ENCODE measurements at regions of chr1 and their contacts with region 1.

Region 1: DNA sequence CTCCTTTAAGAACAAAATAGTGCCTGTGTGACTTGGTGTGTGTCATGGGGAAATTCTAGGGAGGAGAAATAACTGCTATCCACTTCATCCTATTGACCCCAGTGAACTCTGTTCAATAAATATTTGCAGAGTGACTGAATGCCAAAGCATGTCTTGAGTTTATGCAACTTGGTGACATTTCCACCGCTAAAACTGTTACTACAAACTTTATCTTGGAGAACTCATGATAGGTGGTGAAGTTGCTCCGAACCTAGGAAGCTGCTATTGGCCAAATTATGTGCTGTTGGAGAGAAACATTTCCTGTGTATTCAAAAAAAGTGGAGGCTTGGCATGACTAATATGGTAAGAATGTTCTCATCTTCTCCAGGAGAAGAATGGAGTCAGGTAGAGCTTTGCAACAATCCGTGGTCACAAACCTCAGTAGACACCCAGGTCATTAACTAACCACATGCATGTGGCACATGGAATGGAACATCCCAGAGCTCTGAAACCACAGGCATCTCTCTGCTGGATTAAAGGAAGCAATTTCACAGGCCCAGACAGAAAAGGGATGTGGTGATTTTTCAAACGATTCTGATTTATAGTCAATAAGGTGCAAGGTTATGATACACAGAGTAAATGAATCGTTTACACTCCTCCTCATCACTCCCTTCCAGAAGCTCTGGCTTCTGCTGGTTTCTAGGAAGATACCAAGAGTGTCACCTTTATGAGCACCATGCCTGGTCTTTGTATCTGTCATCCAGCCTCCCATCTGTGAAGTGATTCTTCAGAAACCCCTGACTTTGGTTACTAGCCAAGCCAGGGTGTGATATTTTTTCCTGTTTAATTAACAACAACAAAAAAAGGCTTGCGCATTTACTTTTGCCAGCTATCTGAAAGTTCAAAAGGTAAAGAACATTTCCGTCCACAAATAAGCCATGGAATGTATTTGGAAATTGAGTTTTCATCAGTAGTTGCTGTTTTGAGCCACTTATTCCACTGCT is 361.1 kb downstream of the TGFB2 start:
- DNase-seq: peak; percentile 82
- H3K4me3 Mint-ChIP-seq: peak overlapping the region; percentile 17
- H3K27ac Mint-ChIP-seq: peak overlapping the region; percentile 96
- H3K4me1 Mint-ChIP-seq: peaks cover 62% of the 10 kb centered on the region
- H3K27me3 Mint-ChIP-seq: no peaks in the 10 kb centered on the region
- CTCF ChIP-seq: no peak

Region 2: GRCh38 chr1:218345673-218346390 is 360.4 kb before region 1 on chr1:
- CTCF ChIA-PET with region 1: interaction called, 3 read pairs
- intact Hi-C with region 1: loop called (anchors 5 kb)
- DNase-seq: peak; percentile 70
- H3K4me3 Mint-ChIP-seq: no peak overlapping the region
- H3K27ac Mint-ChIP-seq: no peak overlapping the region
- H3K4me1 Mint-ChIP-seq: peaks cover 19% of the 10 kb centered on the region
- H3K27me3 Mint-ChIP-seq: no peaks in the 10 kb centered on the region
- CTCF ChIP-seq: no peak

Region 3: DNA sequence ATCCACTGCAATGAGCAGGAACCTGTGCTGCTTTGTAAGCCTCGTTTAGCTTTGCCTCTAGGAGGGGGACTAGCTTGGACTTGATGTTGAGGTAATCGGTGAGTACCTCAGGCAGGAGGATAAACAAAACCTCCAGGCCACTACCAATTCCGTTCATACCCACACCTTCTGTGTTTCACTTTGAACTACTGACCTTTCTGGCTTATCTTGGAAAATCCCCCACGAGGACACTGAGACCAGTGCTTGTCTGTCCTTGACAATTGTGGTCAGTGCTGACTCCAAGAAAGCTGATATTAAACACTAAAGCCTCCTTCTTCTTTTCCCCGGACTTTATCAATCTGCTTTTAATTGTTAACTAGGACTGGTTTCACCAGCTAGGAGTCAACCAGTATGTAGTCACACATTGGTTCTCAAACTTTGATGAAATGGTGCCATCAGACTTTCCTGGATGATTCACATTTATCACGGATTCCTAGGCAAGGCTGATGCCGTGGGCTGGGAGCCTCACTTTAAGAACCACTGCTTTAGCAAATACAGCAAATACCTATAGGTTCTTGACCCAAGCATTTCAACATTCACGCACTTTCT is 308.4 kb before region 1 on chr1:
- CTCF ChIA-PET with region 1: interaction called, 5 read pairs
- intact Hi-C with region 1: loop called (anchors 1 kb)
- DNase-seq: peak; percentile 82
- H3K4me3 Mint-ChIP-seq: peak overlapping the region; percentile 26
- H3K27ac Mint-ChIP-seq: peak overlapping the region; percentile 71
- H3K4me1 Mint-ChIP-seq: peaks cover 40% of the 10 kb centered on the region
- H3K27me3 Mint-ChIP-seq: no peaks in the 10 kb centered on the region
- CTCF ChIP-seq: no peak

Region 4: GRCh38 chr1:218546309-218546708 is 159.9 kb before region 1 on chr1:
- CTCF ChIA-PET with region 1: no interaction called
- intact Hi-C with region 1: loop called (anchors 2 kb)
- DNase-seq: peak; percentile 24
- H3K4me3 Mint-ChIP-seq: no peak overlapping the region
- H3K27ac Mint-ChIP-seq: peak overlapping the region; percentile 0
- H3K4me1 Mint-ChIP-seq: peaks cover 38% of the 10 kb centered on the region
- H3K27me3 Mint-ChIP-seq: no peaks in the 10 kb centered on the region
- CTCF ChIP-seq: no peak

Region 5: GRCh38 chr1:218779341-218780100 is 73.3 kb after region 1 on chr1:
- CTCF ChIA-PET with region 1: no interaction called
- intact Hi-C with region 1: loop called (anchors 2 kb)
- DNase-seq: peak; percentile 31
- H3K4me3 Mint-ChIP-seq: no peak overlapping the region
- H3K27ac Mint-ChIP-seq: no peak overlapping the region
- H3K4me1 Mint-ChIP-seq: peaks cover 26% of the 10 kb centered on the region
- H3K27me3 Mint-ChIP-seq: no peaks in the 10 kb centered on the region
- CTCF ChIP-seq: no peak

Region 6: GRCh38 chr1:218874313-218874712 is 168.1 kb after region 1 on chr1:
- CTCF ChIA-PET with region 1: no interaction called
- intact Hi-C with region 1: loop called (anchors 1 kb)
- DNase-seq: peak; percentile 52
- H3K4me3 Mint-ChIP-seq: peak overlapping the region; percentile 47
- H3K27ac Mint-ChIP-seq: peak overlapping the region; percentile 68
- H3K4me1 Mint-ChIP-seq: peaks cover 59% of the 10 kb centered on the region
- H3K27me3 Mint-ChIP-seq: no peaks in the 10 kb centered on the region
- CTCF ChIP-seq: no peak

Region 7: GRCh38 chr1:219173758-219174588 is 467.8 kb after region 1 on chr1 and contains the start of gene LYPLAL1:
- CTCF ChIA-PET with region 1: no interaction called
- intact Hi-C with region 1: loop called (anchors 10 kb)
- DNase-seq: peak; percentile 93
- H3K4me3 Mint-ChIP-seq: peak within 1 kb of the TSS; percentile 80
- H3K27ac Mint-ChIP-seq: peak within 1 kb of the TSS; percentile 81
- H3K4me1 Mint-ChIP-seq: peaks cover 34% of the 10 kb centered on the region
- H3K27me3 Mint-ChIP-seq: no peaks in the 10 kb centered on the region
- CTCF ChIP-seq: no peak
- total RNA-seq, gene LYPLAL1: 50.0 and 57.6 TPM in 2 replicates

Measured in Calu3 (cell line).